Activated naive CD4-positive, alpha-beta T cell treated with anti-CD3 and anti-CD28 coated beads for 36 hours (primary cell): ENCODE measurements at regions of chr7 and their contacts with region 1.

Region 1: DNA sequence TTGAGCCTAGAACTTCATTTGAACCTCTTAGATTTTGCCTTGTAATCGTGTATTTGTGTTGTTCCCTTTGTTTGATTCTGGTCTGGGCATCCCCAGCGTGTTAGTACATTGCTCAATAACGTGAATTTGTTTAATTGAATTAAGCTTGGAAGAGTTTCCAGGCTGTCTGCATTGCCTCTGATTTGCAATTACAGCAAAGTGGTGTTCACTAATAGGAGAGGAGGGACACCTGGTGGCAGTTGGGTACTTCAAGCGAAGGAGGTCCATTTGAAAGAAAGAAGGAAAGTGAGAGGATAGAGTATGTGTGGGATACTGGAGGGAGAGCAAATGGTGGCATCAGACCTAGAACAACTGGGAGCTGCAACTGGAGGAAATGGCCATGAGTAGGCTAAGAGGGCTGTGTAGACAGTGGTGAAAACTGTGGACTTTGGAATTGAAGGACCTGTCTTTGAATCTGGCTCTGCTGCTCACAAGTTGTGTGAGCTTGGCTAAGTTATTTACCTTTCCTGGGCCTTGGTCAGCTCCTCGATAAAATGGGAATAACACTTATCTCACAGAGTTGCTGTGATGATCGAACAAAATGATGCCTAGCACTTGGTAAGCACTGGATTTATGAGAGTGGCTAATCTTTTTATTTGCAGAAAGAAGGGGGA is 15.1 kb downstream of the LSMEM1 start:
- DNase-seq: peak; percentile 66
- H3K4me3 Mint-ChIP-seq: no peak overlapping the region
- H3K27ac Mint-ChIP-seq: no peak overlapping the region
- H3K4me1 Mint-ChIP-seq: no peaks in the 10 kb centered on the region
- H3K27me3 Mint-ChIP-seq: peaks cover 2% of the 10 kb centered on the region

Region 2: DNA sequence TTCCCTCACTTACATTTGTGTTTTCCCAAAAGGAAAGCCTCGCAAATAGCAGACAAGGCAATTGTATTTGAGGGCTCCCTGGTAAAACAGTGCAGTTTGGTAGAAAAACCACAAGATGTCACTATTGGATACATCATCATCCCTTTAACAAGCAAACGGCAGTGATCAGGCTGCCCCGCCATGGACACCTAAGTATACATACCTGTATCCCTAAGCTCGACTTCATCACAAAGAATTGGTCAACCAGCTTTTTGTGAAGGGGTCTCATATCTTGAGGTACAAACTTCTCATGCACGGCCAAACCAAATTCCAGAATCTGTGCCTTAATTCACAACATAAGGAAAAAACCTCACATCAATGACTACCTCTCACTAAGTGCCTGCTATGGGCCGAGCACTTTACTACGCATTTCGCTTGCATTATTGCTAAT is 754.1 kb before region 1 on chr7:
- CTCF ChIA-PET with region 1: interaction called, 9 read pairs
- intact Hi-C with region 1: loop called (anchors 1 kb)
- DNase-seq: peak; percentile 55
- H3K4me3 Mint-ChIP-seq: no peak overlapping the region
- H3K27ac Mint-ChIP-seq: no peak overlapping the region
- H3K4me1 Mint-ChIP-seq: no peaks in the 10 kb centered on the region
- H3K27me3 Mint-ChIP-seq: peaks cover 2% of the 10 kb centered on the region

Region 3: DNA sequence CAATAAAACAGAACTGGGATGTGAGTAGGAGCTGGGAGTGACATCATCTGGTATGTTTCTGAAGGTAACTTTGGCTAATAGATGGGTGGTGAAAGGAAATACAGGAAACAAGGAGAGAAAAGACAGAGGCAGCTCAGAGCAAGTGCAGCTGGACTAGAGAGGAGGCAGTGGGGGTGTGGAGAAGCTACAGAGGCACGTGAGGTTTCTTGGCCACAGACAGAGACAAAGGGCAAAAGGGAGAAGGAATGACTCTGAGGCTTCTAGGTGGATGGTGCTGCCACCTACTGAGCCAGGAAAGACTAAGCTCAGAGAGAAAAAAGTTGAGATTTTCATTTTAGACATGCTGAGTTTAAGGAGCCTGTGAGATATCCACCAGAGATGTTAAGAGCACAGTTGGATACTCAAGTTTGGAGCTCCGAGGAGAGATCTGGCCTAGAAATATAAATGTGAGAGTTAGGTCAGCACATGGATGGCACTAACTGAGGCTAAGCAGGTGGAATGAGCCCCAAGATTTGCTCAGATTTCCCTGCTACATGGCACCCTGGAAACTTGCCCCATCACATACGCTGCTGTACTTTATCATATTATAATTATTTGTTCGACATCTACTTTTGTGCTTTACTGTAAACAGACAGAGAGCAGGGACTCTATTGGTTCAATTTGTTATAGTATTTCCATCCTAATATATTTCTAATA is 640.6 kb before region 1 on chr7:
- CTCF ChIA-PET with region 1: no interaction called
- intact Hi-C with region 1: loop called (anchors 5 kb)
- DNase-seq: peak; percentile 24
- H3K4me3 Mint-ChIP-seq: no peak overlapping the region
- H3K27ac Mint-ChIP-seq: no peak overlapping the region
- H3K4me1 Mint-ChIP-seq: no peaks in the 10 kb centered on the region
- H3K27me3 Mint-ChIP-seq: peaks cover 3% of the 10 kb centered on the region

Region 4: GRCh38 chr7:111953611-111954010 is 542.3 kb before region 1 on chr7:
- CTCF ChIA-PET with region 1: no interaction called
- intact Hi-C with region 1: loop called (anchors 10 kb)
- DNase-seq: peak; percentile 13
- H3K4me3 Mint-ChIP-seq: no peak overlapping the region
- H3K27ac Mint-ChIP-seq: no peak overlapping the region
- H3K4me1 Mint-ChIP-seq: no peaks in the 10 kb centered on the region
- H3K27me3 Mint-ChIP-seq: no peaks in the 10 kb centered on the region

Region 5: DNA sequence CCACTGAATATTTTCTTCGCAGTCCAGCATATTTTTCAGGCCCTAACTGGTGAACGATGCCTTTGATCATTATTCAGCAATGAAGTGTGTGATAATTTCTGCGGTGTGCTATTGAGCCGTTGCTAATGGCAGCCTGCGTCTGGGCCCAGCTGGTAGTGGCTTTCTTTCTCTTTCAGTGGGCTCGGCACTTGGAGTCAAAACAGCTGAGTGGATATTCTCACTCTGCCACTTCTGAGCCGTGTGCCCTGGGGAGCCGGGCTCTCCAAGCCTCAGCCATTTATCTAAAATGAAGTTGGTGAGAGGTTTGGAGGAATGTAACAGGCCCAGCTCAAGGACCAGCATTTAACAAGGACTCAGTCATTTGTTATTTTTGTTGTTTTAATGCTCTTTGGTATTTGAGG is 133.2 kb before region 1 on chr7:
- CTCF ChIA-PET with region 1: no interaction called
- intact Hi-C with region 1: no loop called
- DNase-seq: no peak
- H3K4me3 Mint-ChIP-seq: no peak overlapping the region
- H3K27ac Mint-ChIP-seq: no peak overlapping the region
- H3K4me1 Mint-ChIP-seq: no peaks in the 10 kb centered on the region
- H3K27me3 Mint-ChIP-seq: peaks cover 19% of the 10 kb centered on the region

Region 6: GRCh38 chr7:112414855-112415490 is 81.0 kb before region 1 on chr7:
- CTCF ChIA-PET with region 1: no interaction called
- intact Hi-C with region 1: loop called (anchors 2 kb)
- DNase-seq: no peak
- H3K4me3 Mint-ChIP-seq: no peak overlapping the region
- H3K27ac Mint-ChIP-seq: no peak overlapping the region
- H3K4me1 Mint-ChIP-seq: no peaks in the 10 kb centered on the region
- H3K27me3 Mint-ChIP-seq: peaks cover 10% of the 10 kb centered on the region

Region 7: GRCh38 chr7:112556633-112557032 is 60.7 kb after region 1 on chr7:
- CTCF ChIA-PET with region 1: no interaction called
- intact Hi-C with region 1: no loop called
- DNase-seq: peak; percentile 43
- H3K4me3 Mint-ChIP-seq: no peak overlapping the region
- H3K27ac Mint-ChIP-seq: no peak overlapping the region
- H3K4me1 Mint-ChIP-seq: peaks cover 14% of the 10 kb centered on the region
- H3K27me3 Mint-ChIP-seq: no peaks in the 10 kb centered on the region

Region 8: DNA sequence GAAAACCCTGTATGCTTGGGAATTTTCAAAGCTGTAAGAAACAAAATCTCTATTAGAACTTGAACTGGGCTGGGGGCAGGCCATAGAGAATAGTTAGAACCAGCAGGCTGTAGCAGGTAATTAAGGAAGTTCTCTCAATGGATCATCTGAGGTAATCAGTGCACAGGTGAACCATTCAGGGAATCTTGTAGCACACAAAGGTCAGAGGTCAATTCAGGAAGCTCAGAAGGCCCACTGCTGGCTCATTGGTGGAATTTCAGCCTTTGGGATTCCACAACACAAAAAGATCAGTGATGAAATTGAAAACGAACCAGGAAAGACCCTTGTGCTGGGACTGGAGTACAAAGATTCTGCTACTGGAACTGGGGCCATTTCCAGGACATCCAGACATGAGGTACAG is 212.3 kb after region 1 on chr7:
- CTCF ChIA-PET with region 1: no interaction called
- intact Hi-C with region 1: no loop called
- DNase-seq: no peak
- H3K4me3 Mint-ChIP-seq: no peak overlapping the region
- H3K27ac Mint-ChIP-seq: no peak overlapping the region
- H3K4me1 Mint-ChIP-seq: no peaks in the 10 kb centered on the region
- H3K27me3 Mint-ChIP-seq: no peaks in the 10 kb centered on the region